H1 (cell line): ENCODE measurements at regions of chr14 and their contacts with region 1.

Region 1: DNA sequence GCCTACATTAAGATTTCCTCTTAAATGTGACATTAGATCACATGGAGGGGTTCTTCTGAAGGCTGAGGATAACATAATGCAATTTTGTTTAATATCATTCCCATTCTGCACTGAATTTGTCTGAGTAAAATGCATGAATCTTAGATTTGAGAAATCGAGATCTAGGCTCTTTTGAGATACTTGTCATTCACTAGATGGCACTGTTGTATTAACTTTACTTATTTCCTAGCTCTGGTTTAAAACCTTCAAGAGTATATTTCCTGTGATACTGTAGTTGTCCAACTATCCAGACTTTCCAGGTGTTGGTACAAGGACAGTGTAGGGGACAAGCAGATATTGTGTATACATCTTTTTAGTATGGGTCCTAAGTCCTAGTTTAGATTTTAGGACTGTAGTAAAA is 91.7 kb upstream of the SEL1L start:
- DNase-seq: no peak
- H3K4me3 ChIP-seq: no peak overlapping the region
- H3K27ac ChIP-seq: no peak overlapping the region
- H3K4me1 ChIP-seq: no peaks in the 10 kb centered on the region
- H3K27me3 ChIP-seq: no peaks in the 10 kb centered on the region
- CTCF ChIP-seq: peak in 1 of 3 experiments; percentile 46; a peak in 2 of 4 replicates
- EP300 ChIP-seq: no peak
- POLR2A ChIP-seq: no peak
- RAD21 ChIP-seq: peak; percentile 71 to 72

Region 2: DNA sequence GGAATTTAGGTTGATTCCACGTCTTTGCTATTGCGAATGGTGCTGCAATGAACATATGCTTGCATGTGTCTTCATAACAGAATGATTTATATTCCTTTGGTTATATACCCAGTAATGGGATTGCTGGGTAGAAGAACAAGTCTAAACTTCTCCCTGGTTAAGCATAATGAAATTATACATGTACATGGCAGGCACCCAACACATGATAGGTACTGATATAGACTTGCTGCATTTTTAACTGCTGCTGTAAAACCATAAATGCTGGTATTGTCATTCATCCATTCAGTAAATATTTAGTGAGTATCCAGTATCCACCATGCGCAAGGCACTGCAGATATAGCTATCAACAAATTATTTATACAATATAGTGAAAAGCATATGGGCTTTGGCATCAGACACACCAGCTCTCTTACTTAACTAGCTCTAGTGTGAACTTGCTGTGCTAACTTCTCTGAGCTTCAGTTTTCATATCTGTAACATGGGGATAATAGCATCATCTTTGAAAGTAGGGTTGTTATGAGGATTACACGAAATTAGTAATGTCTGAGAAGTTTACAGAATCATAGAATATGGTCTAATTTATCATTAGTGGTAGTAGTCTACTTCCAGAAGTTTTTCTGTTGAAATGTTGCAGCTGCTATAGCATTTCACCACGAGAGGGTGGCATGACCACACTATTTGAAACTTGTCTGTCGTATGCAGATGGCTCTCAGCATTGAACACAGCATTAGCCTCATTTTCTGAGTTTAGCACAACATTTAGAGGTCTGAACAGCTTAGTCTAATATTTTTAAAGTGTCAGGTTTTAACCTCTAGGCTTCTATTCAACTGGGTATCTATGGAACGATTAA is 59.7 kb before region 1 on chr14:
- CTCF ChIA-PET with region 1: interaction called, 41 read pairs
- POLR2A ChIA-PET with region 1: no interaction called
- DNase-seq: no peak
- H3K4me3 ChIP-seq: no peak overlapping the region
- H3K27ac ChIP-seq: no peak overlapping the region
- H3K4me1 ChIP-seq: peaks cover 3 to 18% (median 7%) of the 10 kb centered on the region in 4 experiments; a peak in 5 of 7 replicates
- H3K27me3 ChIP-seq: peaks cover 0 to 3% (median 0%) of the 10 kb centered on the region in 4 experiments; a peak in 1 of 7 replicates
- CTCF ChIP-seq: peak in 2 of 3 experiments; percentile 67 to 76; a peak in 3 of 4 replicates
- EP300 ChIP-seq: no peak
- POLR2A ChIP-seq: no peak
- RAD21 ChIP-seq: peak; percentile 91

Region 3: GRCh38 chr14:81613341-81614045 is 11.8 kb before region 1 on chr14:
- CTCF ChIA-PET with region 1: interaction called, 31 read pairs
- POLR2A ChIA-PET with region 1: interaction called, 4 read pairs
- DNase-seq: no peak
- H3K4me3 ChIP-seq: no peak overlapping the region
- H3K27ac ChIP-seq: no peak overlapping the region
- H3K4me1 ChIP-seq: peaks cover 0 to 3% (median 0%) of the 10 kb centered on the region in 4 experiments; a peak in 1 of 7 replicates
- H3K27me3 ChIP-seq: no peaks in the 10 kb centered on the region
- CTCF ChIP-seq: no peak
- EP300 ChIP-seq: no peak
- POLR2A ChIP-seq: no peak
- RAD21 ChIP-seq: no peak

Region 4: GRCh38 chr14:81638656-81639280 is 13.4 kb after region 1 on chr14:
- CTCF ChIA-PET with region 1: interaction called, 10 read pairs
- POLR2A ChIA-PET with region 1: no interaction called
- DNase-seq: no peak
- H3K4me3 ChIP-seq: no peak overlapping the region
- H3K27ac ChIP-seq: no peak overlapping the region
- H3K4me1 ChIP-seq: peaks cover 0 to 7% (median 2%) of the 10 kb centered on the region in 4 experiments; a peak in 3 of 7 replicates
- H3K27me3 ChIP-seq: no peaks in the 10 kb centered on the region; a peak in 1 of 7 replicates
- CTCF ChIP-seq: no peak
- EP300 ChIP-seq: no peak
- POLR2A ChIP-seq: no peak
- RAD21 ChIP-seq: no peak

Region 5: GRCh38 chr14:81710234-81710845 is 85.0 kb after region 1 on chr14:
- CTCF ChIA-PET with region 1: interaction called, 13 read pairs
- POLR2A ChIA-PET with region 1: no interaction called
- DNase-seq: no peak
- H3K4me3 ChIP-seq: no peak overlapping the region
- H3K27ac ChIP-seq: no peak overlapping the region
- H3K4me1 ChIP-seq: no peaks in the 10 kb centered on the region
- H3K27me3 ChIP-seq: no peaks in the 10 kb centered on the region
- CTCF ChIP-seq: peak in 2 of 3 experiments; percentile 53 to 82; a peak in 2 of 4 replicates
- EP300 ChIP-seq: no peak
- POLR2A ChIP-seq: no peak
- RAD21 ChIP-seq: peak; percentile 88 to 93

Region 6: DNA sequence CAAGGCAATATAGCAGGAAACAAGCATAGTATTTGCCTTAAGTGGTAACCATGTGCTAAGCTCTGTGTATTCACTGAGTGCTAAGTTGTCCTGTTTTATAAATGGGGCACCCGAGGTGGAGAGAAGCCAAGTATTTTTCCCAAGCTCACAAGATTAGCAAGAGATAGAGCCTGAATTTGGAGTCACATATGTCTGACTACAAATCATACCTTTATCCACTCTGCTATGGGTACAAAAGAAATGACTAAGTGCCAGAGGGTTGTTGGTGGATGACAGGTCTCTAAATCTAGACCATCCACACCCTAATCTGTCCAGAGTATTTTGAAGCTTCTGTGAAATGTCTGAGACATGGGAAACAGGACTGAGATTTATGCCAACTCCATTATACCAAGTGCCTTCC is 90.4 kb after region 1 on chr14:
- CTCF ChIA-PET with region 1: interaction called, 10 read pairs
- POLR2A ChIA-PET with region 1: no interaction called
- DNase-seq: no peak
- H3K4me3 ChIP-seq: no peak overlapping the region
- H3K27ac ChIP-seq: no peak overlapping the region
- H3K4me1 ChIP-seq: no peaks in the 10 kb centered on the region
- H3K27me3 ChIP-seq: no peaks in the 10 kb centered on the region
- CTCF ChIP-seq: no peak
- EP300 ChIP-seq: no peak
- POLR2A ChIP-seq: no peak
- RAD21 ChIP-seq: no peak